ENCODE measurements at regions of chr4 and their contacts with region 1.

Region 1: DNA sequence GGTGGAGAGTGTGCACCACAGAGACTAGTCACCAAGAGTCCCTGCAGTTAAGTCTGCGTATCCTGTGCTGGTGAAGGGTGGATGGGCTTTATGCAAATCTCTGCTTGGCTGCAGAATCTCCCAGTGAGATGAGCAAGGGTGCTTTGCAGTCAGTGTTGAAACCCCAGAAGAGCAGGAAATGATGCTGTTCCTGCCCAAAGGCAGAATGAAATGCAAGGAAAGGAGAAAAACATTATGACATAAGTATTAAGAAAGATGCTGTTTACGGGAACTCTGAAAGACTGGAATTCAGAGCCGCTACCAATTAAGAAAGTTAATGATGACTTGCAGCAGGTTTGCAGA is 25.4 kb upstream of the ACSL1 start:
- DNase-seq: no peak
- ATAC-seq: peak; percentile 71
- H3K4me3 Mint-ChIP-seq: no peak overlapping the region
- H3K27ac Mint-ChIP-seq: no peak overlapping the region
- H3K4me1 Mint-ChIP-seq: peaks cover 38% of the 10 kb centered on the region
- H3K27me3 Mint-ChIP-seq: no peaks in the 10 kb centered on the region
- CTCF ChIP-seq: no peak

Region 2: DNA sequence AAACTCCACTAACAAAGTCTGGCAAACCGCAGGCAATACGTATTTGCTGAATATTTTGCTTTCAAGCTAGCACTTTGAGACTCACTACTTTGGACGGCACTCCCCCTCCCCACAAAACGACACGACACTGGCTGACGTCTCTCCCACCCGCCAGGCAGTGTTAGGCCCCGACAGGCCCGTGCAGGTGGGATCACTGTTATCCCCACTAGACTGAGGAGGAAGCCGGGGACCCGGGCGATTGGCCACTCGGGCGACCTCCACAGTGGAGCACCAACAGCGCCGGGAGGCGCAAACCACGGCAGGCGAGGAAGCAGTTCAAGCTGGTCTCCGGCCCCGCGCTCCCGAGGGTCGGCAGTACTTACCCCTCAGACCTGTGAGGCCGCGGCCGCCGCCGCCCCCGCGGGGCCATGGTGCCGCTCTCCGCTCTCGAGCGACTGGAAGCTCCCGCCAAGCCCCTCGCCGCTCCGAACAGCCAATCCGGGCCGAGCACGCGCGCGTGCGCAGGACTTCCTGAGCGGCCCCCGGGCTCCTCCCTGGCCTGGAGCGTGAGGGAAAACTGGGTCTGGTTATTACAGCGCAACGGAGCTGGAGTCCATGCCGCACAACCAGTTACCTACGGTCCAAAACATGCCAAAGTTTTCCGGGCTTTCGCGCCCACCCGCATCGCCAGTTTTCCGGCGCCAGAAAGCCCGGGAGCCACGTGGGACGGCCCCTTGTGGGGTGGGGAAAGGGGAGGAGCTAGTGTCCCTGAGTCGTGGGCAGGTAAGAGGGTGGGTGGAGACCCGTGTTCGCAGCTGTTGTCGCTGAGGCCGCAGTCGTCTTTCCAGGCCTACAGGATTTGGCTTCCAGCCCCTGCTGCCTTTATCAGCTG is 117.3 kb before region 1 on chr4 and contains the start of gene CENPU:
- CTCF ChIA-PET with region 1: no interaction called
- POLR2A ChIA-PET with region 1: no interaction called
- intact Hi-C with region 1: loop called (anchors 5 kb)
- DNase-seq: peak; percentile 95
- ATAC-seq: peak; percentile 96
- H3K4me3 Mint-ChIP-seq: peak within 1 kb of the TSS; percentile 88
- H3K27ac Mint-ChIP-seq: peak within 1 kb of the TSS; percentile 85
- H3K4me1 Mint-ChIP-seq: peaks cover 19% of the 10 kb centered on the region
- H3K27me3 Mint-ChIP-seq: no peaks in the 10 kb centered on the region
- CTCF ChIP-seq: no peak
- total RNA-seq, gene CENPU: 7.0 and 7.1 TPM in 2 replicates

Region 3: GRCh38 chr4:184815046-184815877 is 35.9 kb before region 1 on chr4:
- CTCF ChIA-PET with region 1: no interaction called
- POLR2A ChIA-PET with region 1: interaction called, 5 read pairs
- intact Hi-C with region 1: loop called (anchors 1 kb)
- DNase-seq: peak; percentile 33
- ATAC-seq: peak; percentile 68
- H3K4me3 Mint-ChIP-seq: peak overlapping the region; percentile 60
- H3K27ac Mint-ChIP-seq: peak overlapping the region; percentile 87
- H3K4me1 Mint-ChIP-seq: peaks cover 81% of the 10 kb centered on the region
- H3K27me3 Mint-ChIP-seq: no peaks in the 10 kb centered on the region
- CTCF ChIP-seq: no peak

Region 4: DNA sequence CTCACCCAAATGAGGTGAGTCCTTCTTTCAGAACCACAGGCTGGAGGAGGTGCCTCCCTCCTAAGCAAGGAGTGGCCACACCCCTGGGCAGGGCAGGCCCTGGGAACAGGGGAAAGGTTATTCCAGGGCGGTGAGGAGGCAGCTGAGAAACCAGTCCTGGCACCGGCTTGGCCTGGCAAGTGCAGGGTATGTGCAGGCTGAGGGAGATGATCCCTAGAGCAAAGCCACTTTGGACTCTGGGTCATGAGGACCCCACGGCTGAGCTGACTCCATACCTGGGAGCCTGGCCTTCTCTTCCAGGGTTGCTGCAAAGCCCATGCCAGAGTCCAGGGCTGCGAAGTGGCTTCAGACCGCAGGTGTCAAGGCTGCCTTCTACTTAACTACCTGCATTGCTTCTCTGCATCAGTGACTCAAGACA is 117.6 kb after region 1 on chr4:
- CTCF ChIA-PET with region 1: no interaction called
- POLR2A ChIA-PET with region 1: no interaction called
- intact Hi-C with region 1: loop called (anchors 2 kb)
- DNase-seq: no peak
- ATAC-seq: no peak
- H3K4me3 Mint-ChIP-seq: no peak overlapping the region
- H3K27ac Mint-ChIP-seq: no peak overlapping the region
- H3K4me1 Mint-ChIP-seq: peaks cover 7% of the 10 kb centered on the region
- H3K27me3 Mint-ChIP-seq: peaks cover 5% of the 10 kb centered on the region
- CTCF ChIP-seq: no peak

Region 5: DNA sequence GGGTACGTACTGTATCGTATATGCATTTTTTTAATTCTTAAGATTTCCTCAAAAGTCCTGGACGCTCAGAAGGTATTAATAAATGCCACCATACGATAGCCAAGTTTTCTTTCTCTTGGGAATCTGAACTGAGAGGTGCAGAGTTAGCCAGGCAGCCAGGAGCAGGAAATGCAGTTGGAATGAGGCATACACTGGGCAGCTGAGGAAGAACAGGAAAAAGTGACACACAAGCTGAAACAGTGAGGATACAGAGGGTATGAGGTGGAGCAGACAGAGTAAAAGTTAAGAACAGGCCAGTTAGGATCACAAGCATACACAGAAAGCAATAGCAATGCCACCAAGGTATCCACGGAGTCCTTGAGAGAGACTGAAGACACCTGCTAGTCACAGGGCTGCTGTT is 561.2 kb after region 1 on chr4:
- CTCF ChIA-PET with region 1: no interaction called
- POLR2A ChIA-PET with region 1: no interaction called
- intact Hi-C with region 1: no loop called
- DNase-seq: no peak
- ATAC-seq: no peak
- H3K4me3 Mint-ChIP-seq: no peak overlapping the region
- H3K27ac Mint-ChIP-seq: no peak overlapping the region
- H3K4me1 Mint-ChIP-seq: no peaks in the 10 kb centered on the region
- H3K27me3 Mint-ChIP-seq: no peaks in the 10 kb centered on the region
- CTCF ChIP-seq: no peak

Measured in activated B cell treated with CpG ODN at 0.5 μM for 24 hours (primary cell).